Endothelial cell of umbilical vein (primary cell): ENCODE measurements at regions of chr3 and their contacts with region 1.

Region 1: GRCh38 chr3:61829750-61830400 is 268.5 kb downstream of the PTPRG start:
- DNase-seq: no peak
- H3K4me3 ChIP-seq: no peak overlapping the region
- H3K27ac ChIP-seq: no peak overlapping the region
- H3K4me1 ChIP-seq: peaks cover 14% of the 10 kb centered on the region
- H3K27me3 ChIP-seq: no peaks in the 10 kb centered on the region
- CTCF ChIP-seq: no peak
- POLR2A ChIP-seq: no peak

Region 2: DNA sequence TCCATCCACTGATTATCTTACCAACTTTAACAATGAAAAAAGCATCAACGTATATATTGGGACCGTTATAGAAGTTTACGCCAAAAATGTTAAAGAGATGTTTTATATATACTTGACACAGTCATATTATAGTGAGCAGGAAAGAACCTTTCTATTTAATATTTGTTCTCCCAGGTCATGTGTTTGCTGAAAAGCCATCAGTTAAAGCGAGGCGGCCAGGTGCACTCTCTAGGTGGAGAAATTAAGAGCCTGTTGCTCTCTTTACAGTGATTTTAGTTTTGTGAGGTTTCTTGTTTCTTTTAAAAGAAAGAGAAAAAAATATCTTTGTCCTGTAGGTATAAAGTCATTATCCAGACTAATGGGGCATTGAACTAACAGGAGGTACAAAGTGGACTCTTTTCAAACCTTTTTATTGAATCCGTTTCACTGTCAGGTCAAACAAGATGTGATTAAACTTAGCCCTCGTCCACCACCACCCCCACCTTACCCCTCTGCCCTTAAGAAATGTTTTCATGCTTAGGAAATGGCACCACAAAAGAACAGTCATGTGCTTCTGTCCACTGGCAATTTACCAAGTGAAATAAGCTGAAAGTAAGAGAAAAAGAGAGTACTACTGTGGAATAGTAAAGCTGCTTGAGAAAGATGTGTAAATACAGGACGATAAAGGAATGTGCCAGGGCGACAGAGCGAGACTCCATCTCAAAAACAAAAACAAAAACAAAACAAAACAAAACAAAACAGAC is 11.4 kb after region 1 on chr3:
- CTCF ChIA-PET with region 1: interaction called, 7 read pairs
- POLR2A ChIA-PET with region 1: no interaction called
- dilution Hi-C with region 1: no loop called
- intact Hi-C with region 1: loop called (anchors 1 kb)
- DNase-seq: peak; percentile 87
- H3K4me3 ChIP-seq: peak overlapping the region in 1 of 3 experiments; percentile 4
- H3K27ac ChIP-seq: peak overlapping the region; percentile 8
- H3K4me1 ChIP-seq: peaks cover 7% of the 10 kb centered on the region
- H3K27me3 ChIP-seq: no peaks in the 10 kb centered on the region
- CTCF ChIP-seq: no peak
- POLR2A ChIP-seq: no peak